Upper lobe of right lung (tissue), 1 donor: ENCODE measurements at regions of chr16 and their contacts with region 1.

Region 1: GRCh38 chr16:69112285-69113129 is 7.1 kb downstream of the HAS3 start:
- DNase-seq: peak; percentile 82
- ATAC-seq: peak; percentile 82
- H3K4me3 ChIP-seq: no peak overlapping the region
- H3K27ac ChIP-seq: no peak overlapping the region
- H3K4me1 ChIP-seq: peaks cover 21% of the 10 kb centered on the region
- H3K27me3 ChIP-seq: no peaks in the 10 kb centered on the region
- CTCF ChIP-seq: peak; percentile 76

Region 2: GRCh38 chr16:68528686-68529379 is 583.7 kb before region 1 on chr16:
- intact Hi-C with region 1: loop called (anchors 10 kb)
- DNase-seq: peak; percentile 93
- ATAC-seq: peak; percentile 94
- H3K4me3 ChIP-seq: peak overlapping the region; percentile 19
- H3K27ac ChIP-seq: no peak overlapping the region
- H3K4me1 ChIP-seq: peaks cover 18% of the 10 kb centered on the region
- H3K27me3 ChIP-seq: no peaks in the 10 kb centered on the region
- CTCF ChIP-seq: peak; percentile 98

Region 3: GRCh38 chr16:68902008-68902968 is 210.2 kb before region 1 on chr16:
- intact Hi-C with region 1: loop called (anchors 10 kb)
- DNase-seq: no peak
- ATAC-seq: peak; percentile 89
- H3K4me3 ChIP-seq: no peak overlapping the region
- H3K27ac ChIP-seq: no peak overlapping the region
- H3K4me1 ChIP-seq: no peaks in the 10 kb centered on the region
- H3K27me3 ChIP-seq: no peaks in the 10 kb centered on the region
- CTCF ChIP-seq: peak; percentile 66